Endothelial cell of umbilical vein (primary cell): ENCODE measurements at regions of chr6 and their contacts with region 1.

Region 1: GRCh38 chr6:156564127-156564806 is 212.9 kb upstream of the ARID1B start:
- DNase-seq: peak; percentile 67
- H3K4me3 ChIP-seq: no peak overlapping the region
- H3K27ac ChIP-seq: no peak overlapping the region
- H3K4me1 ChIP-seq: no peaks in the 10 kb centered on the region
- H3K27me3 ChIP-seq: peaks cover 0 to 4% of the 10 kb centered on the region in 2 experiments
- CTCF ChIP-seq: peak; percentile 88 to 94
- POLR2A ChIP-seq: no peak

Region 2: DNA sequence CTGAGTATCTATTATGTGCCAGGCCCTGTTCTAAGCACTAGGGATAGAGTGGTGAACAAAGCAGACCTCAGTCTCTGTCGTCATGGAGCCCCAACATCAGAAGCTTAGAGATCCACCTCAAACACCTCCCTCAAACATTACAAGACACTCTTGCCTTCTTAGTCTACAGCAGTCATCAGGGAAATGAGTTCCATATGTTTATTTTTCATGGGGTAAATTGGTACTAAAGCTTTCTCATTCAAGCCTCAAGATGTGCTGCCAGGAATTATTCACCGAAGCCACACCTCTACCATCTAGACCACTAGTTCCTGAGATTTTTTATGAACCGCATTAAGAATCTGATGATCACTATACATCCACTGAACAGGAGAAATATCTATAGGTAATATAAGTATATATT is 1191.0 kb before region 1 on chr6:
- CTCF ChIA-PET with region 1: no interaction called
- POLR2A ChIA-PET with region 1: no interaction called
- dilution Hi-C with region 1: no loop called
- intact Hi-C with region 1: loop called (anchors 5 kb)
- DNase-seq: no peak
- H3K4me3 ChIP-seq: no peak overlapping the region
- H3K27ac ChIP-seq: no peak overlapping the region
- H3K4me1 ChIP-seq: no peaks in the 10 kb centered on the region
- H3K27me3 ChIP-seq: peaks cover 0 to 5% of the 10 kb centered on the region in 2 experiments
- CTCF ChIP-seq: no peak
- POLR2A ChIP-seq: no peak

Region 3: GRCh38 chr6:156175971-156176421 is 388.3 kb before region 1 on chr6:
- CTCF ChIA-PET with region 1: no interaction called
- POLR2A ChIA-PET with region 1: no interaction called
- dilution Hi-C with region 1: no loop called
- intact Hi-C with region 1: loop called (anchors 1 kb)
- DNase-seq: peak; percentile 24
- H3K4me3 ChIP-seq: no peak overlapping the region
- H3K27ac ChIP-seq: no peak overlapping the region
- H3K4me1 ChIP-seq: no peaks in the 10 kb centered on the region
- H3K27me3 ChIP-seq: no peaks in the 10 kb centered on the region
- CTCF ChIP-seq: peak in 1 of 2 donors; percentile 38
- POLR2A ChIP-seq: no peak

Region 4: DNA sequence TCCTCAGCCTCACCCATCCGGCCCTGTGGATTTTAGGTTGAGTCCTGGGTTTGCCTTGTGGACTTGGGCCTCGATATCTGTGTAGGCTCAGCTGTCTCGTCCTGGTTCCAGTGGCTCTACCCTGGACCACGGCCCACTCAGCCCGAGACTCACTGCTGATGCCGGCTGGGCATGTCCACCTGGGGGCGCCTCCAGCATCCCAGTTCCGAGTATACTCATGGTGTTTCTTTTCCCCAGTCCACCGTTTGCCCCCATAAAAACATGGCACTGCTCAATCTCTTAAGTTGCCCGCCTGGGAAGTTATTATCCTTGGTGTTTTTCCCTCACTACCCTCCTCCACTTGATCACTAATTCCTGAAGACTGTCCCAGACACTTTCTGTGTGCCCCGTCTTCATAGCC is 312.0 kb after region 1 on chr6:
- CTCF ChIA-PET with region 1: interaction called, 3 read pairs
- POLR2A ChIA-PET with region 1: no interaction called
- dilution Hi-C with region 1: no loop called
- intact Hi-C with region 1: loop called (anchors 10 kb)
- DNase-seq: no peak
- H3K4me3 ChIP-seq: no peak overlapping the region
- H3K27ac ChIP-seq: no peak overlapping the region
- H3K4me1 ChIP-seq: peaks cover 6% of the 10 kb centered on the region
- H3K27me3 ChIP-seq: no peaks in the 10 kb centered on the region
- CTCF ChIP-seq: peak; percentile 34 to 47
- POLR2A ChIP-seq: no peak

Region 5: GRCh38 chr6:156953479-156954146 is 389.3 kb after region 1 on chr6:
- CTCF ChIA-PET with region 1: interaction called, 7 read pairs
- POLR2A ChIA-PET with region 1: no interaction called
- dilution Hi-C with region 1: no loop called
- intact Hi-C with region 1: loop called (anchors 5 kb)
- DNase-seq: peak; percentile 93
- H3K4me3 ChIP-seq: no peak overlapping the region
- H3K27ac ChIP-seq: no peak overlapping the region
- H3K4me1 ChIP-seq: peaks cover 38% of the 10 kb centered on the region
- H3K27me3 ChIP-seq: no peaks in the 10 kb centered on the region
- CTCF ChIP-seq: peak in 1 of 2 donors; percentile 6
- POLR2A ChIP-seq: no peak

Region 6: GRCh38 chr6:157045831-157046454 is 481.7 kb after region 1 on chr6:
- CTCF ChIA-PET with region 1: interaction called, 11 read pairs
- POLR2A ChIA-PET with region 1: no interaction called
- dilution Hi-C with region 1: no loop called
- intact Hi-C with region 1: no loop called
- DNase-seq: peak; percentile 44
- H3K4me3 ChIP-seq: no peak overlapping the region
- H3K27ac ChIP-seq: no peak overlapping the region
- H3K4me1 ChIP-seq: peaks cover 14% of the 10 kb centered on the region
- H3K27me3 ChIP-seq: no peaks in the 10 kb centered on the region
- CTCF ChIP-seq: peak; percentile 39 to 48
- POLR2A ChIP-seq: no peak

Region 7: GRCh38 chr6:157274471-157275226 is 710.4 kb after region 1 on chr6:
- CTCF ChIA-PET with region 1: no interaction called
- POLR2A ChIA-PET with region 1: no interaction called
- dilution Hi-C with region 1: no loop called
- intact Hi-C with region 1: loop called (anchors 1 kb)
- DNase-seq: peak; percentile 73
- H3K4me3 ChIP-seq: peak overlapping the region; percentile 35 to 43 (median 42)
- H3K27ac ChIP-seq: no peak overlapping the region
- H3K4me1 ChIP-seq: peaks cover 7% of the 10 kb centered on the region
- H3K27me3 ChIP-seq: no peaks in the 10 kb centered on the region
- CTCF ChIP-seq: peak; percentile 54 to 82
- POLR2A ChIP-seq: no peak